Caco-2 (cell line): ENCODE measurements at regions of chr7 and their contacts with region 1.

Region 1: GRCh38 chr7:94087664-94088352 is 83.7 kb upstream of the BET1 start:
- DNase-seq: peak; percentile 54 to 60
- H3K4me3 ChIP-seq: no peak overlapping the region
- H3K4me3 Mint-ChIP-seq: no peak overlapping the region
- H3K27ac Mint-ChIP-seq: no peak overlapping the region
- H3K4me1 ChIP-seq: no peaks in the 10 kb centered on the region
- H3K4me1 Mint-ChIP-seq: no peaks in the 10 kb centered on the region
- H3K27me3 ChIP-seq: peaks cover 2% of the 10 kb centered on the region; the same call in 1 of the 2 replicates
- H3K27me3 Mint-ChIP-seq: peaks cover 28% of the 10 kb centered on the region
- CTCF ChIP-seq: peak; percentile 53 to 88

Region 2: DNA sequence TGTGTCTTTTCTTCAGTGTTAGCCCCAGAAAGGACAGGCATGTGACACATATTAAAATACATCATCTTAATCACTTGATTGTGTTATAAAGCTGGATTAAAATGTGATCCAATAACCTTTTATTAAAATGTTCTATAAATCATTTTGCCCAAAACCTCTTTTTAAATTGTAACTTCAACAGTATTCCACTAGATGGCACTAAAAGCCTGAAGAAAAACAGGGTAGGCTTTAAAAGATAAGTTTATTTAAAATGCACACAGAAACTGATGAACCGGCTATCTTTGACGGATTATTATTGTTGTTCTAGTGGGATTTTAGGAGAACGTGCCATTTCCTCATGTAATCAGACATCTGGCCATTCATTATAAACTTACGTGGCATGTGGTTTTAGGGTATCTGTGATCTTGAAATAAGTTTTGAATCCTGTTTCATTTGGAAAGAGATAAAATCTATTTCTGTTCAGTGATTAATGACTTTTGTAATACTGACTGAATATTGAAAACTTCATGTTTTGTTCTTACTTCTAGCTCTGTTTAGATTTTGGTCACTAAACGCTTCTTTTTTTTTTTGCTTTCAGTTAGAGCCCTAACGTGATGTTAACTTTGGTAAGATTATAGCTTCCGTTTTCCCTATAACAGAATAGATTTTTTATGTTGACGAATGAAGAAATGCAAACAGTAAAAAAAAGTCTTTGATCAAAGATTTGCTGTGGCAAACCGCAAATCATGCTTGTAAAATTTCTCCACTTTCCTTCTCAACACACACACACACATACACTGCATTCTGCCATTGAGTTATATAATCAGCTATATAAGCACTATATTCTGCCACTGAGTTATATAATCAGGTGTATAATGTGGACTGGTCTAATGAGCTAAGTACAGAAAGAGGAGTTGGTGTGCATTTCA is 842.0 kb before region 1 on chr7:
- CTCF ChIA-PET with region 1: no interaction called
- POLR2A ChIA-PET with region 1: no interaction called
- intact Hi-C with region 1: loop called (anchors 1 kb)
- DNase-seq: peak in 1 of 2 experiments; percentile 24
- H3K4me3 ChIP-seq: no peak overlapping the region
- H3K4me3 Mint-ChIP-seq: no peak overlapping the region
- H3K27ac Mint-ChIP-seq: no peak overlapping the region
- H3K4me1 ChIP-seq: peaks cover 10% of the 10 kb centered on the region; the same call in 1 of the 2 replicates
- H3K4me1 Mint-ChIP-seq: peaks cover 21% of the 10 kb centered on the region
- H3K27me3 ChIP-seq: no peaks in the 10 kb centered on the region
- H3K27me3 Mint-ChIP-seq: no peaks in the 10 kb centered on the region
- CTCF ChIP-seq: peak in 1 of 2 experiments; percentile 51

Region 3: DNA sequence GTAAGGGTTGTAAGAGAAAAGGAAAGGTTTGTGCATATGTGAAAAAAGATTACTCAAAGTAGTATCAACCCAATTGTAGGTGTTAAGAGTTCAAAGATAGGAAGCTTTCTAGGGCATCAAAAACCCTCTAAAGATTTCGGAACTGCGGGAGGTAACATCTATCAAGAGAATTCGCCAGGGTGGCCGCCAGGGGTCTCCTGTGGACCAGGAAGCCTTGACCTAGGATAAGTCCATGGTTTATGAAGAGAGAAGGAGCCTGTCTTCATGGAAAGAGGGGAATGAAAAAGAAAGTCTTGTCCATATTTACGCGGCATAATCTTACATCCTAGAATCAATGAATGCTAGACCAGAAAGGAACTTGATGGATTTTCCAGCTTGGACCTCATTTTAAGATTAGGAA is 372.6 kb before region 1 on chr7:
- CTCF ChIA-PET with region 1: no interaction called
- POLR2A ChIA-PET with region 1: no interaction called
- intact Hi-C with region 1: loop called (anchors 1 kb)
- DNase-seq: peak; percentile 58 to 71
- H3K4me3 ChIP-seq: no peak overlapping the region
- H3K4me3 Mint-ChIP-seq: no peak overlapping the region
- H3K27ac Mint-ChIP-seq: no peak overlapping the region
- H3K4me1 ChIP-seq: peaks cover 12% of the 10 kb centered on the region
- H3K4me1 Mint-ChIP-seq: no peaks in the 10 kb centered on the region
- H3K27me3 ChIP-seq: no peaks in the 10 kb centered on the region
- H3K27me3 Mint-ChIP-seq: no peaks in the 10 kb centered on the region
- CTCF ChIP-seq: peak; percentile 70 to 82

Region 4: DNA sequence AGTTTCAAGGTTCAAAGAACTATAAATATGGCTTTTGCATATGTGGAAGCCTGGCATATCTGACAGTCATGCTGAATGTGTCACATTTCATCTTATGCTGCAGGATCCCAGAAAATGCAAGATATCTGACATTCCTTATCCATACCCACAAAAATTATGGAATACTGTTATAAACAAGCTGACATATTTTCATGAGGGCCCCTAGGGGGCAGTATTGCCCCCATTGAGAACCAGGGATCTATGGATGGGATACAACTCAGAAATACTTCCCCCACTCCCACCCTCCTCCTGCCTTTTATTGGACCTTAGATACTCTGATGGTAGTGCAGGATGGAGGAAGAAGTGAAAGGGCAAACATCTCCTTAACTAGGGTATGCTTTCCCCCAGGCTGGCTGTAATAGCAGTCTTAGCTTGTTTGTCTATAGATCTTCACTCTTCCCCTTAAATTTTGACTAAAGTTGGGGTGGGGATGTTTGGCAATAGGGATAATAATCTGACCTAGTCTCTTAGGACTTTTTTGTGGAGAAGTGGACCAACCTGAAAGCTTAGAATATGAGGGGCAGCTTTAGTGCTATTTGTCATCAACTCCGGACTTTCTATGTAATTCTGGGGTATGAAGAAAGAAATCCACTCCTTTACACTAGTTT is 184.9 kb before region 1 on chr7:
- CTCF ChIA-PET with region 1: interaction called, 3 read pairs
- POLR2A ChIA-PET with region 1: no interaction called
- intact Hi-C with region 1: loop called (anchors 1 kb)
- DNase-seq: no peak
- H3K4me3 ChIP-seq: no peak overlapping the region
- H3K4me3 Mint-ChIP-seq: no peak overlapping the region
- H3K27ac Mint-ChIP-seq: no peak overlapping the region
- H3K4me1 ChIP-seq: peaks cover under 1% of the 10 kb centered on the region; the same call in 1 of the 2 replicates
- H3K4me1 Mint-ChIP-seq: peaks cover 1% of the 10 kb centered on the region
- H3K27me3 ChIP-seq: no peaks in the 10 kb centered on the region; the same call in 1 of the 2 replicates
- H3K27me3 Mint-ChIP-seq: peaks cover 3% of the 10 kb centered on the region
- CTCF ChIP-seq: peak; percentile 56 to 60

Region 5: DNA sequence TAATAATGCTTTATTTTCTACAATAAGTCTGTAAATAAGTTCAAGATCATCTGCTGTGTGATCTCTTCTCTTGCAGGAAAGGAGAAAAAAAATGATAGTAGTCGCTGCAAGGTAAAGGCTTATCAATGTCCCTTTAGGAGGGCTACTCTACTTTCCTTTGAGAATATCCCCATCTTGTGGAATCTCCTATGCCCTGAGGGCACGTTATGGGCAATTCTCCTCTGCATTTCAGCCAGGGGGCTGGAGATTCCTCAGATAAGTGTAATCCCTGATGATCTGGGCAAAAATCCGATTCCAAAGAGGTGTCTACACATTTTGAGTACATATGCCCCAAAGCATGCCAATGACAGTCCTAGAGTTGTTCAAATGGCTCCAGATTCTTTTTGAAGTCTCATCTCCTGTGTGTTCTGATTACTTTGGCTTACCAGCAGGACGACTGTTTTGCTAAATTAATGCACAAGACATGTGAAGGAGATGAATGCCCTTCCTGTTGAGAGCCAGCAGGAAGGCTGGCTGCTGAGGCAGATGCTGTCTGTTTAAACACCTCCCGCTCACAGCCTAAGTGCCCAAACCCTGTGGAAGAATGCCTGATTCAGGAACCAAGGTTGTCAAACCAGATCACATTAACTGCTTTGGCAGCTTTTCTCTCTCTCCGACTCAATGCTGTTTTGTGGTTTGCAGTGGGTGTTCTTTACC is 135.7 kb after region 1 on chr7:
- CTCF ChIA-PET with region 1: no interaction called
- POLR2A ChIA-PET with region 1: no interaction called
- intact Hi-C with region 1: loop called (anchors 10 kb)
- DNase-seq: peak; percentile 39 to 43
- H3K4me3 ChIP-seq: no peak overlapping the region
- H3K4me3 Mint-ChIP-seq: no peak overlapping the region
- H3K27ac Mint-ChIP-seq: no peak overlapping the region
- H3K4me1 ChIP-seq: 0 out of 2 replicates have a peak, but pooled peaks cover 2% of the 10 kb centered on the region
- H3K4me1 Mint-ChIP-seq: peaks cover 9% of the 10 kb centered on the region
- H3K27me3 ChIP-seq: no peaks in the 10 kb centered on the region
- H3K27me3 Mint-ChIP-seq: no peaks in the 10 kb centered on the region
- CTCF ChIP-seq: peak; percentile 16 to 17